ENCODE measurements at regions of chr2 and their contacts with region 1.

Region 1: GRCh38 chr2:24221343-24222050 is 46.6 kb downstream of the FAM228A start:
- DNase-seq: no peak
- ATAC-seq: no peak
- H3K4me3 ChIP-seq: no peak overlapping the region
- H3K27ac ChIP-seq: no peak overlapping the region
- H3K4me1 ChIP-seq: no peaks in the 10 kb centered on the region
- H3K27me3 ChIP-seq: no peaks in the 10 kb centered on the region
- CTCF ChIP-seq: no peak

Region 2: DNA sequence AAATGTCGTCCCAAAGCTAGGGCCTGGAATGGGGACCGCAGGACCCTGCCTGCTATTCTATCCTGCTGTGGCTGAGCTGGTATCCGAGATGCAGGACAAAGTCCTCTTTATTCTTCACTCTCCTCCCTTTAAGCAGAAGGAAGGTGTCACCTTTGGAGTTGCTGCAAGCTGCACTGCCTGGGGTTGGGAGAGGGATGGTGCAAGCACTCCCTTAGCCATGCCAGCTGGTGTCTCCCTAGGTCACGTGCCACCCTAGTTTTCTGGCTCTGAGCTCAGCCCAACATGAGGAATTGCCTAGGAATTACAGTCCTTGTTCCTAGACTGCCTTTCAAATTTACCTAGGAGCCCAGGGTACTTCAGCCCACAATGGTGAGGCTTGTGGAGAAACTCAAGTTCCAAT is 68.0 kb before region 1 on chr2:
- CTCF ChIA-PET with region 1: no interaction called
- POLR2A ChIA-PET with region 1: no interaction called
- intact Hi-C with region 1: no loop called
- DNase-seq: no peak
- ATAC-seq: no peak
- H3K4me3 ChIP-seq: no peak overlapping the region
- H3K27ac ChIP-seq: no peak overlapping the region
- H3K4me1 ChIP-seq: no peaks in the 10 kb centered on the region
- H3K27me3 ChIP-seq: no peaks in the 10 kb centered on the region
- CTCF ChIP-seq: no peak

Region 3: DNA sequence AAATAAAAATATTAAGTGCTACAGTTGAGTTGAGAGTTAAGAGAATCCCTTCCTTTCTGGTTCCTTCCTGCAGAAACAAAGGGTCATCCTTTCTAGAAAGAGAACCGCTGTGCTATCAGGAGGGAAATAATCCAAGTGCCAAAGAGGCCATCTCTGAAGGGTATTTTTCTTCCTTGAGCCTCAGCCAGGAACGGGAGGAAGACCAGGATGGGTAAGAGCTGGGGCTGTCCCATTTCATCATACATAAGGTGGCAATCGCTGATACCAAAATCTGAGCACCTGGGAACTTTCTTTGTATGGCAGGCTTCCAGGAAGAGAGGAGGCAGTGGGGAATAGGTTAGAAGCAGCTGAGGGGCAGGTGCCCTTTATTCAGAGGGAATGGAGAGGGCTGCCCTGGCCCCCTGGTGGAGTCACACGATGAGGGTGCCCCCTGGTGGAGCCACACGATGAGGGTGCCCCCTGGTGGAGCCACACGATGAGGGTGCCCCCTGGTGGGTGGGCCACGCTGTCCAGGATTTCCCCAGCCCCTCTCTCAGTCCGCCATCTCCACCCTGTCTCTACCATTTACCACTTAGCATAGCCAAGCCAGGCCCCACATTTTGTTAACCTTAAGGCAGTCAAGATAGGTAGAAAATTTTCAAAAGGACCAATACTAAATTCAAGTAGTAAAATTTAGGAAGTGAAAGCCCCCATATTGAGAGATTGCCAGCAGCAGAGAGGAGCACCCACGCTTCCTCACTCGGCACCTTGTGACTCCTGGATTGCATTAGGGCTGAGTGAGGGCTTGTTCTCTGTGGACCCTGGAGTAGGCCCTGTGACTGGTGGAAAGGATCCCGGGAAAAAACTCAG is 57.1 kb before region 1 on chr2:
- CTCF ChIA-PET with region 1: no interaction called
- POLR2A ChIA-PET with region 1: interaction called, 10 read pairs
- intact Hi-C with region 1: no loop called
- DNase-seq: peak; percentile 30
- ATAC-seq: peak; percentile 27; the same call in 1 of the 2 replicates
- H3K4me3 ChIP-seq: no peak overlapping the region
- H3K27ac ChIP-seq: no peak overlapping the region
- H3K4me1 ChIP-seq: no peaks in the 10 kb centered on the region
- H3K27me3 ChIP-seq: no peaks in the 10 kb centered on the region
- CTCF ChIP-seq: peak; percentile 91

Measured in PC-3 (cell line).